Activated naive CD4-positive, alpha-beta T cell treated with anti-CD3 and anti-CD28 coated beads for 36 hours (primary cell): ENCODE measurements at regions of chr4 and their contacts with region 1.

Region 1: DNA sequence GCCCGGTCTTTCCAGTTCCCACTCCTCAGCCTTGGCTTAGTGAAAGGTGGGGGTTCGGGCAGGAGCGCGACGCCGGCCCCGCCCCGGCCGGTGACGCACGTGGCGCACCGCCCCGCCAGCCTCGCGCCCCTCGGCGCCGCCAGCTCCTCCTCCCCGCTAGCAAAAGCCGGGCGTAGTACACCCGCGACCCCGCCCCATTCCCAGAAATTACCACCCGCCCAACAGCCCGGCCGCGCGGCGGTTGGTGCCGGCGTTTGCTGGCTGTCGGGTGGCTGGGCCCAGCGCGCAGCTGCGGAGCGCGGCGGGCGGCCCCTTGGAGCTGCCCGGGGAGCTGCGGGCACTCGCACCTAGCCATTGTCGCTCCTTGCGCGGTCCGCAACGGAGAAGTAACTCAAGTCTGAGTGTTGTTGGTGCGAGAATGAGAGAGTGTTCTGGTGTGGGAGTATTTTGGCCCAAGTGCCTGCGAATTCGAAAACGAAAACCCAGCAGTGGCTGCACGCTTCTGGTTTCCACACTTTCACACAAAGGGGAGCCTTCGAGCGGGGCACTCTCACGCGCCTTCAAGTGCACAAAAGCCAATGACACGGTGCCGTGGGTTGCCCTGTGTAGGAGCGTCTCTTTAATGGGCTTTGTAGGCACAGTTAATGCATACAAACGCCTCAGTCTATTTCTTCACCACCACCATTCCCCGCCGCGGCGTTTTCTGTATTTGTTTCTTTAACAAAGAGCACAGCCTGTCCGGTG is 1.0 kb upstream of the ELF2 start:
- DNase-seq: peak; percentile 95
- H3K4me3 Mint-ChIP-seq: peak overlapping the region; percentile 84
- H3K27ac Mint-ChIP-seq: peak overlapping the region; percentile 63
- H3K4me1 Mint-ChIP-seq: peaks cover 13% of the 10 kb centered on the region
- H3K27me3 Mint-ChIP-seq: peaks cover 5% of the 10 kb centered on the region

Region 2: GRCh38 chr4:139083956-139084803 is 93.9 kb before region 1 on chr4:
- CTCF ChIA-PET with region 1: interaction called, 4 read pairs
- intact Hi-C with region 1: loop called (anchors 1 kb)
- DNase-seq: peak; percentile 90
- H3K4me3 Mint-ChIP-seq: peak overlapping the region; percentile 99
- H3K27ac Mint-ChIP-seq: peak overlapping the region; percentile 99
- H3K4me1 Mint-ChIP-seq: peaks cover 30% of the 10 kb centered on the region
- H3K27me3 Mint-ChIP-seq: no peaks in the 10 kb centered on the region

Region 3: GRCh38 chr4:139266583-139267257 is 88.7 kb after region 1 on chr4:
- CTCF ChIA-PET with region 1: no interaction called
- intact Hi-C with region 1: loop called (anchors 1 kb)
- DNase-seq: peak; percentile 91
- H3K4me3 Mint-ChIP-seq: peak overlapping the region; percentile 52
- H3K27ac Mint-ChIP-seq: peak overlapping the region; percentile 60
- H3K4me1 Mint-ChIP-seq: peaks cover 18% of the 10 kb centered on the region
- H3K27me3 Mint-ChIP-seq: no peaks in the 10 kb centered on the region

Region 4: DNA sequence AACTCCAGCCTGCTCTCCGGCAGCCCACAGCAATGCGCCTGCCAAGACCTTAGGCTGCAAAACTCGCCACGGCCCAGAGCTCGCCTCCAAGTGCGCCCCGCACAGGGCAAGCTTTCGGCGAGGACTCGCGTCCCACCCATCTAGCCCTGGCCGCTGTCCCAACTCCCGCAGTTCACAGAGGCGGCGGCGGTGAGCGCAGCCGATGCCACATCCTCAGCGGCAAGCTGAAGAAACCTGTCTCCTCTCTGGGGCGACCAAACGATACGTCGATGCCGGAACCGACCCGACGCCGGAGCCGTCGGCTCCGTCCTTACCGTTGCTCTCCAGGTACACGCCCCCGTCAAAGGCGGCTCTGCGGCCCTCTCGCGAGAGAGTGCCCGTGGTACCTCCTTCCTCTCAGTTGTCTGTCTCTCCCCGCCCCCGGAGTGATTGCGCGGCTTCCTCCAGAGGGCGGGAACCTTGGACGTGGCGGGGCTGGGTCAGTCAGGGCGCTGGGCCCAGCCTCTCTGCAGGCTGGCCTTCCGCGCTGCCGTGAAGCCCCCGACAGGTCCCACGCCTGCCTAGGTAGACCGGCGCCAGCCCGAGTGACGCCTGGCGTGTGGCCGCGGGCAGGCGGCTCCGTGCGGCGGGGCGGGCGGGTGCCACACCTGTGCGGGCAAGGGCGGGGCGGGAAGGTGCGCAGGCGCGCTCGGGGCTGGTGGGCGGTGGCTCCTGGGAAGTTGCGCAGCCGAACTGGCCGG is 275.5 kb after region 1 on chr4:
- CTCF ChIA-PET with region 1: no interaction called
- intact Hi-C with region 1: loop called (anchors 1 kb)
- DNase-seq: peak; percentile 98
- H3K4me3 Mint-ChIP-seq: peak overlapping the region; percentile 97
- H3K27ac Mint-ChIP-seq: peak overlapping the region; percentile 98
- H3K4me1 Mint-ChIP-seq: peaks cover 50% of the 10 kb centered on the region
- H3K27me3 Mint-ChIP-seq: no peaks in the 10 kb centered on the region

Region 5: DNA sequence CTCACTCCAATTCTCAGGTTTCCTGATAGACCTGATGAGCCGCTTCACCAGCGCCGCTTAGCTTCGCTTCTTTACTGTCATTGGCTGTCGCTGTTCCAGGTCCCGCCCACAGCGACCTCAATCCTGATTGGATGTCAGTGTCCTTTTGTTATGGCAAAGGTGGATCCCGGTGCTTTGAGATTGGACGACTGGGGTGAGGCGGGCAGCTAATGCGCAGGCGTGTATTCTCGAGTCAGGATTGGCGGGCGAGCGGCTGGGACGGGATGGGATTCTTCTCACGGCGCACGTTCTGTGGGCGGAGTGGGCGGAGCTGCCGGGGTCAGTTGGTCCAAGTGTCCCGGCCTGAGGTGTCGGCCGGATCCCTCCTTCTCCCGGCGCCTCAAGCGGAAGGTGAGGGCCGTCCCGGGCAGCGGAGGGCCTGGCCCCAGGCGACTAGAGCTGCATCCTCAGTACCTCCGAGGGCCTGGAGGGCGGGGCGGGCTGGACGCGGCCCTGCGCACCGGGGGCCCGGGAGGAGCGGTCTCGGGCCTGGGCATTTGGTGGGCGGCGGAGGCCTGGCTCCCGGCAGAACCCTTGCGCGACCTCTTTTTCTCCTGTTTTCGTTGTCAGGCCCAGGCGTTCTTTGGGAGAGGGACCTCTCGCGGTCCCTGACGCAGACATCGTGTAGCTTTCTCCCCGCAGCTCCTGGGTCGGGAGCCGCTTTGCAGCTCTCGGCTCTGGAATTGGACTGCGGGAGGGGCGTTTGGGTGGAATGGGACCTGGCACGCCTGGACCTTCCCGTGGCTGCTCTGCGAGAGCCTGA is 1195.5 kb after region 1 on chr4 and contains the start of gene SCOC:
- CTCF ChIA-PET with region 1: no interaction called
- intact Hi-C with region 1: loop called (anchors 10 kb)
- DNase-seq: peak; percentile 99
- H3K4me3 Mint-ChIP-seq: no peak within 1 kb of the TSS
- H3K27ac Mint-ChIP-seq: peak within 1 kb of the TSS; percentile 69
- H3K4me1 Mint-ChIP-seq: peaks cover 33% of the 10 kb centered on the region
- H3K27me3 Mint-ChIP-seq: no peaks in the 10 kb centered on the region
- total RNA-seq, gene SCOC: 44.7 to 49.4 TPM